ENCODE measurements at regions of chr2 and their contacts with region 1.

Region 1: DNA sequence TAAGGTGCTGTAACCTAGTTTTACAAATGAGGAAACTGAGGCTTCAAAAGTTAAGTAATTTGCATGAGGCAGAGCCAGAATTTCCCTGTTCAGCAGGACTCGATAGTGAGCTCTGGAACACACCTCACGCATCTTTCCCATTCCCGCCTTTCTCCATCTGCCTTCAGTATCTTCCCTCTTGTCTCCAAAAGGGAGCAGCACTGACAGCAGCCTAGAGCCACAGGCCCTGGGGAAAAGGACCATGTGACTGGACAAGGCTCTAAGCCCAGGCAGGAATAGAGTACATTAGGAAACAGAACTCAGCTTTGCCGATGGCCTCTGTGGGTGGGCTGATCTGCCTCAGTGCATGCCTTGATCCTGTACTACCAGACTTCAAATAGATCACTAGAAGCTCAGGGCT is 21.5 kb downstream of the GPR155 start:
- DNase-seq: peak in 1 of 2 experiments; percentile 33
- ATAC-seq: peak; percentile 56 to 67; a peak in 4 of 6 replicates
- H3K4me3 ChIP-seq: no peak overlapping the region
- H3K27ac ChIP-seq: no peak overlapping the region
- H3K4me1 ChIP-seq: no peaks in the 10 kb centered on the region
- CTCF ChIP-seq: no peak
- EP300 ChIP-seq: no peak
- POLR2A ChIP-seq: no peak
- RAD21 ChIP-seq: no peak

Region 2: GRCh38 chr2:174362949-174363348 is 102.4 kb before region 1 on chr2:
- CTCF ChIA-PET with region 1: no interaction called
- POLR2A ChIA-PET with region 1: no interaction called
- DNase-seq: no peak
- ATAC-seq: no peak
- H3K4me3 ChIP-seq: no peak overlapping the region
- H3K27ac ChIP-seq: no peak overlapping the region
- H3K4me1 ChIP-seq: no peaks in the 10 kb centered on the region
- CTCF ChIP-seq: no peak
- EP300 ChIP-seq: no peak
- POLR2A ChIP-seq: no peak
- RAD21 ChIP-seq: no peak

Region 3: GRCh38 chr2:174487108-174487819 is 21.9 kb after region 1 on chr2:
- CTCF ChIA-PET with region 1: interaction called, 38 read pairs
- POLR2A ChIA-PET with region 1: no interaction called
- DNase-seq: peak; percentile 80 to 98
- ATAC-seq: peak; percentile 95 to 97
- H3K4me3 ChIP-seq: peak overlapping the region; percentile 73
- H3K27ac ChIP-seq: peak overlapping the region; percentile 66 to 89
- H3K4me1 ChIP-seq: 0 out of 3 replicates have a peak, but pooled peaks cover 5% of the 10 kb centered on the region
- CTCF ChIP-seq: no peak
- EP300 ChIP-seq: no peak
- POLR2A ChIP-seq: peak; percentile 67
- RAD21 ChIP-seq: no peak

Region 4: DNA sequence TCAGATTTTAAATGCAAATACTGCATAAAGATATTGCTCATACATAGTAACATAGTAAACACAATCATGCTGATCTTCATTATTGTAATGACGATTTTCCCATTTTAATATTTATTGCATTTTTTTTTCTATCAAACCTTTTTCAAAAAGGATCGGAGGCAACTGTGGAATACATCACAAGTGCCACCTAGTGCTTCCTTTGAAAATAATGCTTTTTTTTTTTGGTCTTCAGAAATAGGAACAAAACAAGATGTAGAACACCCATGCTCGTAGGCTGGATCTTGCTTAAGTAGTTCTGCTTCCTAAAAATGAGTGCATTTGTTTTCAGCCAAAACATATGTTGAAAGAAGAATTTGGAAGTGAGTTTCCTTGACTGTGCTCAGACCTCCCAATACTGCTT is 57.2 kb after region 1 on chr2:
- CTCF ChIA-PET with region 1: interaction called, 27 read pairs
- POLR2A ChIA-PET with region 1: no interaction called
- DNase-seq: peak in 1 of 2 experiments; percentile 29
- ATAC-seq: 0 out of 6 replicates have a peak, but pooled peaks of 1 of the 2 experiments have one; percentile 47
- H3K4me3 ChIP-seq: no peak overlapping the region
- H3K27ac ChIP-seq: no peak overlapping the region
- H3K4me1 ChIP-seq: no peaks in the 10 kb centered on the region
- CTCF ChIP-seq: peak; percentile 50
- EP300 ChIP-seq: no peak
- POLR2A ChIP-seq: no peak
- RAD21 ChIP-seq: peak; percentile 36 to 49; a peak in 4 of 5 replicates

Region 5: GRCh38 chr2:174597345-174598047 is 132.2 kb after region 1 on chr2 and contains the start of gene WIPF1:
- CTCF ChIA-PET with region 1: interaction called, 12 read pairs
- POLR2A ChIA-PET with region 1: no interaction called
- DNase-seq: no peak
- ATAC-seq: no peak
- H3K4me3 ChIP-seq: no peak within 1 kb of the TSS
- H3K27ac ChIP-seq: no peak within 1 kb of the TSS
- H3K4me1 ChIP-seq: peaks cover 13% of the 10 kb centered on the region; the same call in 1 of the 3 replicates
- CTCF ChIP-seq: no peak
- EP300 ChIP-seq: no peak
- POLR2A ChIP-seq: no peak
- RAD21 ChIP-seq: no peak
- polyA plus RNA-seq, gene WIPF1: 18.4 and 20.1 TPM in 2 replicates

Region 6: DNA sequence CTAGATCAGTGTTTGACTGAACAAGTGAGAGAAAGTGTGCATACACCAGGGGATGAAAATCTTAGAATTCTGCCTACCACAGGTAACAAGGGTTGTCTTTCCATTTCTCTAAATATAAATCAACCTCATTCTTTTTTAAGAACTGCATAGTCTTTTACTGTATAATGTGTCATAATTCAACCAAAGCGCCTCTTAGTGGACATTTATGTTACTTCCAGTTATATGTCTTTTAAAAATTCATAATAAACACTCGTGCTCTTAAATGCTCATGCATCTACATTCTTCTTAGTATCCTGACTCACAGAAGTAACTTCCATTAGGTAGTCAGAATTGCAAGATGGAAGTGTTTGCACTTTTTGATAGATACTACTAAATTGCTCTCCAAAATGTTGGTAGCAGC is 222.8 kb after region 1 on chr2:
- CTCF ChIA-PET with region 1: interaction called, 78 read pairs
- POLR2A ChIA-PET with region 1: no interaction called
- DNase-seq: peak in 1 of 2 experiments; percentile 34
- ATAC-seq: peak in 1 of 2 experiments; percentile 56; a peak in 2 of 6 replicates
- H3K4me3 ChIP-seq: no peak overlapping the region
- H3K27ac ChIP-seq: no peak overlapping the region
- H3K4me1 ChIP-seq: 0 out of 3 replicates have a peak, but pooled peaks cover 8% of the 10 kb centered on the region
- CTCF ChIP-seq: peak; percentile 75
- EP300 ChIP-seq: no peak
- POLR2A ChIP-seq: no peak
- RAD21 ChIP-seq: peak; percentile 60 to 63

Region 7: DNA sequence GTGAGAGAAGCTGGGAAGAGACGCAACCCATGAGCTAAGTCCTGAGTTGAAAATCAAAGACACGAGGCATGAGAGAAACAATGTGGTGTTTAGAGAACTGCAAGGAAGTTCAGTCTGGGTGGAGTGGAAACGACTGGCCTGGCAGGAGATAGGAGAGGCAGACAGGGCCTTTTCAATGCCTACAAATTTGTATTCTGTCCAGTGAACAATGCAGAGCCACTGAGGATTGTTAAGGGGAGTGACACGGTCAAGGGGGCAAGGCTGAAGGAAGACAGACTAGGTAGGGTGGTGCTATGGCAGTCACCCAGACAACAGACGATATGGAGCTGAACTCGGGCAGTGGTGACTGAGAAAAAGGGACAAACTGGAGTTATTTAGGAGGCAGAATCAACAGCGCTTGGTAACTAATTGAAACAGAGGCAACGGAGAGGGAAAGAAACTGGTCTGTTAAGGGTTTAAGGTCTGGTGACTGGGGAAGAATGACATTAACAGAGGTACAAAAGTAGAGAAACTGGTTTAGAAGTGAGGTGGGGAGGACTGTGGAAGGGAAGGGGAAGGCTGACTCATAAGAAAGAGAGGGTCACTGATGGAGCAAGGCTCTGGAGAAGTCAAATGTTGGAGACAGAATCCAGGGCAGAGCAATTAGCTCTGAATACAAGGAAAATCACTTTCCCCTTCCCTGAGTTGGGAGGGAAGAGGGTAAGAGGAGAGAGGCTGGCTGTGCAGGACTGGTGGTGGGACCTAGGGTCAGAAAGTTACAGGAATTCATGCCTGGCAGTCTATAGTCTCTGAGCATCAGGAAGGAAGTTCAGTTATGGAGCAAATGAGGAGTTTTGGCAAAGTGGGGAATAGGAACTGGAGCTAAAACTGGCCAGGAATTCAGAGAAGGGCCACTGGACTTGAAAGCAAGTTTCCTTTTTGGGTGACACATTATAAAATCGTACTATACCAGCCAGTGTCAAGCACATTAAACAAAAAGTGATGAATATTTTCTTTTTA is 362.3 kb after region 1 on chr2:
- CTCF ChIA-PET with region 1: no interaction called
- POLR2A ChIA-PET with region 1: no interaction called
- DNase-seq: no peak
- ATAC-seq: no peak
- H3K4me3 ChIP-seq: no peak overlapping the region
- H3K27ac ChIP-seq: no peak overlapping the region
- H3K4me1 ChIP-seq: no peaks in the 10 kb centered on the region
- CTCF ChIP-seq: no peak
- EP300 ChIP-seq: no peak
- POLR2A ChIP-seq: no peak
- RAD21 ChIP-seq: no peak